ENCODE measurements at regions of chr3 and their contacts with region 1.

Region 1: GRCh38 chr3:172562871-172563863 is 39.9 kb upstream of the TNFSF10 start:
- DNase-seq: peak; percentile 32
- H3K4me3 Mint-ChIP-seq: peak overlapping the region; percentile 63
- H3K27ac Mint-ChIP-seq: peak overlapping the region; percentile 84
- H3K4me1 Mint-ChIP-seq: peaks cover 32% of the 10 kb centered on the region
- H3K27me3 Mint-ChIP-seq: no peaks in the 10 kb centered on the region

Region 2: DNA sequence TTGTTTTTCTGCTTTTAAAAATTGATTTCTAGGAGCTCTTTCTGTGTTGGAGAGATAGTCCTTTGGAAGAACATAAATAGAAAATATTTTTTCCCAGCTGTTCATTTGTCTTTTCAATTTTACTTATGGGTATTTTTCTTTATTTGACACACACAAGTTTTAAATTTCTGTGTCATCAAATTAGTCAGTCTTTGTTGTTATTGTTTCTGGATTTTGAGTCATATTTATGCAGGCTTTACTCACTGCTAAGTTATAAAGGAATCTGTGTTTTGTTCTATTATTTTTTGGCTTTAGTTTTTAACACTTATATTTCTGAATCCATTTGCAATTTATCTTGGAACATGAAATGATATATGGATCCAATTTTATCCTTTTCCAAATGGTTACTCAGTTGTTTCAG is 109.0 kb before region 1 on chr3:
- CTCF ChIA-PET with region 1: no interaction called
- POLR2A ChIA-PET with region 1: no interaction called
- DNase-seq: no peak
- H3K4me3 Mint-ChIP-seq: no peak overlapping the region
- H3K27ac Mint-ChIP-seq: no peak overlapping the region
- H3K4me1 Mint-ChIP-seq: peaks cover 6% of the 10 kb centered on the region
- H3K27me3 Mint-ChIP-seq: peaks cover 48% of the 10 kb centered on the region

Region 3: DNA sequence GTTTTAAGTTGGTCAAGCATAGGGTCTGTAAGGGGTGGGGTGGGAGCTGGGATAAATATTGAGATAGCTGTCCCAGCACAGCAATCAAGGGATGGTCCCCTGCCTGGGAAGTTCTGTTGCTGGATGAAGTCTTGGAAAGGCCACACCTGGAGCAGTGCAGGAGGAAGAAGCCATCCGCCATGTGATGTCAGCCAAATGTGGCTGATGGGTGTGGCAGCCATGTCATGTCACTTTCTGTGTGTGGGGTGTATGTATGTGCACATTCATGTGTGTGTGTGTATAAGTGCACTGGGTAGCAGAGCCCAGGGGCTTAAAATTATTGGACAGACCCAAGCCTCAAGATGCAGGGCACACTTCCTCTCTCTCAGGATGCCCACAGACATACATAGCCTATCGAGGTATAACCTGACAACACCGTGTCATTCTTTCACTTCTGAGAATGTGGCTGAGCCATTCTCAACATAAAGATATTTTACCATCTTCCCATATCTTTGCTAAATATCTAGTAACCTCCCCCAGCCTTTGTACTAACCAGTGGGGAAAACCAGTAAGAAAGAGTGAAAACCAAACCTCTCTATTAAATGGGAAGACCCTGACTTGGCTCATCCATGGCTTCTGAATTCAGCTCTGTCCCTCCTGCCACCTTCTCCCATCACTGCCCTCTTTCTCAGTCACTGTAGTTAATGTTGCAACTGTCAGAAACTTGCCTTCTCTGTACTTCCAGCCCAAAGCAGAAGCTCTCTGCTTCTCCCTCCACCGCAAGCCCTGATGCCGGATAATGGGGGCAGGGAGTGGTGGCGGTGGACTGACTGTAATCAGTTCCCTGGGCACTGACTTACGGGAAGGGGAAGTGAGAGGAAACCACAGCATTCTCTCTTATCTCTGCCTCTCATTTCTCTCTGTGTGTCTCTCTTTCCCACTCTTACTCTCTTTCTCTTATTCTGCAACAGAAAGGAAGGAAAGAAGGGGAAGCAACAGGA is 51.1 kb before region 1 on chr3:
- CTCF ChIA-PET with region 1: no interaction called
- POLR2A ChIA-PET with region 1: interaction called, 12 read pairs
- DNase-seq: peak; percentile 79
- H3K4me3 Mint-ChIP-seq: peak overlapping the region; percentile 52
- H3K27ac Mint-ChIP-seq: peak overlapping the region; percentile 87
- H3K4me1 Mint-ChIP-seq: peaks cover 83% of the 10 kb centered on the region
- H3K27me3 Mint-ChIP-seq: no peaks in the 10 kb centered on the region

Region 4: GRCh38 chr3:172530566-172530965 is 32.6 kb before region 1 on chr3:
- CTCF ChIA-PET with region 1: interaction called, 6 read pairs
- POLR2A ChIA-PET with region 1: interaction called, 28 read pairs
- DNase-seq: peak; percentile 49
- H3K4me3 Mint-ChIP-seq: peak overlapping the region; percentile 31
- H3K27ac Mint-ChIP-seq: peak overlapping the region; percentile 88
- H3K4me1 Mint-ChIP-seq: peaks cover 40% of the 10 kb centered on the region
- H3K27me3 Mint-ChIP-seq: no peaks in the 10 kb centered on the region

Region 5: GRCh38 chr3:172550347-172550943 is 12.7 kb before region 1 on chr3:
- CTCF ChIA-PET with region 1: interaction called, 3 read pairs
- POLR2A ChIA-PET with region 1: interaction called, 15 read pairs
- DNase-seq: peak; percentile 81
- H3K4me3 Mint-ChIP-seq: peak overlapping the region; percentile 18
- H3K27ac Mint-ChIP-seq: peak overlapping the region; percentile 51
- H3K4me1 Mint-ChIP-seq: peaks cover 44% of the 10 kb centered on the region
- H3K27me3 Mint-ChIP-seq: no peaks in the 10 kb centered on the region

Region 6: GRCh38 chr3:172580680-172581401 is 17.7 kb after region 1 on chr3:
- CTCF ChIA-PET with region 1: interaction called, 9 read pairs
- POLR2A ChIA-PET with region 1: interaction called, 22 read pairs
- DNase-seq: no peak
- H3K4me3 Mint-ChIP-seq: peak overlapping the region; percentile 49
- H3K27ac Mint-ChIP-seq: peak overlapping the region; percentile 91
- H3K4me1 Mint-ChIP-seq: peaks cover 92% of the 10 kb centered on the region
- H3K27me3 Mint-ChIP-seq: no peaks in the 10 kb centered on the region